ENCODE measurements at regions of chr12 and their contacts with region 1.

Region 1: DNA sequence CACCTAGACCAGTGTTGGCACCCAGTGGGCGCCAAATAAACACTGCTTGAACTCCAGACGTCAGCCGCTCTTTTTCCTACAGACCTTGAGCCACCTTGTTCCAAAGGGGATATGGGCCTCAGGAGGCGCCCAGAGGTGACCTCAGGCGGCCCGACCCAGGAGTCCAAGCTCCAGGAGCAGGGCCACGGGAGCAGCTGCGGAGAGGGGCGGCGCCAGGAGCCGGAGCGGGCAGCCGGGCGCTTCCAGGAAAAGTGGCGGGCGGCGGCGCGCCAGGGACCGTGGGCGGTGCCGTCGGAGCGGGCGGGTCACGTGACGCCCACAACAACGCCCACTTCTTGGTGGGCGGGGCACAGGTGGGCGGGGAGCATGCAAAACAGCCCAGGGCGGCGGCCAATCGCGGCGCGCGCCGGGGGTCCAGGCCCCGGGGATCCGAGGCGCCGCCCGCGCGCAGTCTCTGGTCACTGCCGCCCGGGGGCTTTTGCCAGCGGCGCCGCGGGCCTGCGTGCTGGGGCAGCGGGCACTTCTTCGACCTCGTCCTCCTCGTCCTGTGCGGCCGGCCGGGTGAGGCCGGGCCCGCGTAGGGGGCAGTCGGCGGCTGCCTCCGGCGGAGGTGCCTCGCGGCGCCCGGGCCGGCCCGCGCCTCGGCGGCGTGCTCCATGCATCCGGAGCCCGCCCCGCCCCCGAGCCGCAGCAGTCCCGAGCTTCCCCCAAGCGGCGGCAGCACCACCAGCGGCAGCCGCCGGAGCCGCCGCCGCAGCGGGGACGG is at the start of gene ORAI1:
- DNase-seq: peak; percentile 97
- H3K4me3 Mint-ChIP-seq: peak within 1 kb of the TSS; percentile 90
- H3K27ac Mint-ChIP-seq: peak within 1 kb of the TSS; percentile 87
- H3K4me1 Mint-ChIP-seq: peaks cover 46% of the 10 kb centered on the region
- H3K27me3 Mint-ChIP-seq: no peaks in the 10 kb centered on the region
- total RNA-seq, gene ORAI1: 69.0 to 70.3 TPM

Region 2: DNA sequence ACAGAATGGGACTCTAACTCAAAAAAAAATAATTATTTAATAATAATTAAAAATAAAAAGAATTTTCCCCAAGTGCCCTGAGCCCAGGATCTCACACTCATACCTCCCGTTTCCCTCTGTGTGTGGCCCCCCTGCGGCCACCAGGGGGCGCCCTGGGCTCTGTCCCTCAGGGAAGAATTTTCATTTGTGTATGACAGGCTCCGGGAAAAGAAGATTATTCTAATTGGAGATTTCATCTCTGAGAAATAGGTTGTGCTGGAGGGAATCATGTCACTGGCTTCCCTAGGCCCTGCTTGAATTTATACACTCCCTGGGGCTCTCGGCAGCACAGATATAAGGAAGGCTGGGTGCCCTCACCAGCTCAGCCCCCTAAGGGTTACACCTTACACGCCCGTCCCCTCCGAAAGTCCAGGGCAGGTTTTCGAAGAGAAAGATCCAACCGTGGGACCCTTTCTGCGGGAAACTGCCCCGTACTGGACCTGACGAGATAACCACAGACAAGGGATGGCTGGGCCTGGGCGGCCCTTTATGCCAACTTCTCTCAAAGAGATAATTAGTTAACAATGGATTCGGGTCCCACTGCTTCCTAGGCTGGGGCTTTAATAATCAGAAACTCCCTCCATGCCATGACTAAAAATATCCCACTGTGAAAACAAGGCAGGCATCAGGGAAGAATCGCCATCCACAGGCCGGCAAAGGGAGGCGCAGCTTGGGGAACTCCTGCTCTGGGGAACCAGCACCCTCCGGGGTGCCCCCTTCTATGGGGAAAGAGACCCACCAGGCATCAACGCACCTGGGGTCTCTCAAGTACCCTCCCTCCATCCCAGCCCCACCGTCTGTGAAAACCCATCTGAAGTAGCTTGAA is 126.1 kb before region 1 on chr12:
- CTCF ChIA-PET with region 1: interaction called, 17 read pairs
- POLR2A ChIA-PET with region 1: no interaction called
- DNase-seq: peak; percentile 73
- H3K4me3 Mint-ChIP-seq: no peak overlapping the region
- H3K27ac Mint-ChIP-seq: no peak overlapping the region
- H3K4me1 Mint-ChIP-seq: peaks cover 16% of the 10 kb centered on the region
- H3K27me3 Mint-ChIP-seq: no peaks in the 10 kb centered on the region

Region 3: GRCh38 chr12:121523741-121524140 is 102.5 kb before region 1 on chr12:
- CTCF ChIA-PET with region 1: no interaction called
- POLR2A ChIA-PET with region 1: no interaction called
- DNase-seq: no peak
- H3K4me3 Mint-ChIP-seq: no peak overlapping the region
- H3K27ac Mint-ChIP-seq: no peak overlapping the region
- H3K4me1 Mint-ChIP-seq: peaks cover 6% of the 10 kb centered on the region
- H3K27me3 Mint-ChIP-seq: no peaks in the 10 kb centered on the region

Region 4: DNA sequence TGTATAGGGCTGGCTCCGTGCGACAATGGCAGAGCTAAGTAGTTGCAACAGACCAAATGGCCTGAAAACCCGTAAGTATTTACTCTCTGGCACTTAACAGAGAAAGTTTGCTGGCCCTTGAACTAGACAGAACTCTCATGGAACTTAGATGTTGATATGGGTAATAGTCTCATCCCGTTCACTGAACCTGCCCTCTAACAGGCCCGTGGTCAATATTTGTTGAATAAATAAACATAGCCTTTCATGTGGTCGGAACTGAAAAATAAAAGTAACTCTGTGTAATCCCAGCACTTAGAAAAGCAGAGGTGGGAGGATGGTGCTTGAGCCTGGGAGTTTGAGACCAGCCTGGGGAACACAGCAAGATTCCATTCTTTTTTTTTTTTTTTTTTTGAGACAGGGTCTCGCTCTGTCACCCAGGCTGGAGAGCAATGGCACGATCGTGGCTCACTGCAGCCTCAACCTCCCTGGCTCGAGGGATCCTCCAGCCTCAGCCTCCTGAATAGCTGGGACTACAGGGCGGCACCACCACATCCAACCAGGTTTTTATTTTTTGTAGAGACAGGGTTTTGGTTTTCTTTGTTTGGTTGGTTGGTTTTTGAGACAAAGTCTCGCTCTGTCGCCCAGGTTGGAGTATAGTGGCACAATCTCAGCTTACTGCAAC is 75.2 kb before region 1 on chr12:
- CTCF ChIA-PET with region 1: interaction called, 90 read pairs
- POLR2A ChIA-PET with region 1: interaction called, 31 read pairs
- DNase-seq: no peak
- H3K4me3 Mint-ChIP-seq: no peak overlapping the region
- H3K27ac Mint-ChIP-seq: no peak overlapping the region
- H3K4me1 Mint-ChIP-seq: peaks cover 12% of the 10 kb centered on the region
- H3K27me3 Mint-ChIP-seq: no peaks in the 10 kb centered on the region

Region 5: DNA sequence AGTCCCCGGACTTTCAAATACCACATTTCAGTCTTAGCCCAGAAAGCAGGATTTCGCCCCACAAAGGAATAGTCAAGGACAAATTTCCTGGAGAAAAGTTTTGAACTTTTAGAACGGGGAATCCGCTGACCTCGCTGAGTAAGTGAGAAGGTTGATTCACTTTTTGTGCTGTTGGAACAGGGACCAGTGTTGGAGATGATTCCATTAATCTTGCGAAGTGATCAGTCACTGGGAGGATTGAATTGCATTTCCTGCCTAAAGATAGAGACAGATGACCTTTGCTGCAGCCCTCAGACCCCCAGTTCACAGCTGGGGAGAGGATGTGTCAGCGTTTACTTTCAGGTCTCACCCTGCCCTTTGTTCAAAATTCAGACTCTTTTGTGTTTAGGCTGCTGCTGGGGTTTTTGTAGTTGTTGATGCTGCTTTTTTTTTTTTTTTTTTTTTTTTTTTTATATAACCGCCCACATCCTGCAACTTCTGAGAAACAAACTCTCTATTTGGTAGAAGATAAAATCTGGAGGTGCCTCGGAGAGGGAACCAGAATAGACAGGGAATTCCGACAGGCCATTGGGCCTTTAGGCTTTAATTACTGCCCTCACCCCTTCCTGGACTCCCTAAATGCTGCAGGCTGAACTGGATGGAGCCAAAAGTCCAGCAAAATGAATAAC is 35.7 kb before region 1 on chr12:
- CTCF ChIA-PET with region 1: interaction called, 11 read pairs
- POLR2A ChIA-PET with region 1: interaction called, 42 read pairs
- DNase-seq: peak; percentile 66
- H3K4me3 Mint-ChIP-seq: peak overlapping the region; percentile 72
- H3K27ac Mint-ChIP-seq: peak overlapping the region; percentile 100
- H3K4me1 Mint-ChIP-seq: peaks cover 33% of the 10 kb centered on the region
- H3K27me3 Mint-ChIP-seq: no peaks in the 10 kb centered on the region

Region 6: DNA sequence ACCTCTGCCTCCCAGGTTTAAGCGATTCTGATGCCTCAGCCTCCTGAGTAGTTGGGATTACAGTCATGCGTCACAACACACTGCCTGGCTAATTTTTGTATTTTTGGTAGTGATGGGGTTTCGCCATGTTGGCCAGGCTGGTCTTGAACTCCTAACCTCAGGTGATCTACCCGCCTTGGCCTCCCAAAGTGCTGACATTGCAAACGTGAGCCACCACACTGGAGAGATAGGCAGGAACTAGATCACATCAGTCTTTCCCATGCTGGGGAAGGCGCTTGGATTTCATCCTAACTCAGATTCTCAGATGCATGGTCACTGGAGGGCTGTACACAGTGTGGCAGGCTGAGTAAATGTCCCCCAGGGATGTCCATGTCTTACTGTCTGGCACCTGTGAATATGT is 18.0 kb before region 1 on chr12:
- CTCF ChIA-PET with region 1: no interaction called
- POLR2A ChIA-PET with region 1: no interaction called
- DNase-seq: no peak
- H3K4me3 Mint-ChIP-seq: no peak overlapping the region
- H3K27ac Mint-ChIP-seq: no peak overlapping the region
- H3K4me1 Mint-ChIP-seq: peaks cover 2% of the 10 kb centered on the region
- H3K27me3 Mint-ChIP-seq: peaks cover 1% of the 10 kb centered on the region

Region 7: DNA sequence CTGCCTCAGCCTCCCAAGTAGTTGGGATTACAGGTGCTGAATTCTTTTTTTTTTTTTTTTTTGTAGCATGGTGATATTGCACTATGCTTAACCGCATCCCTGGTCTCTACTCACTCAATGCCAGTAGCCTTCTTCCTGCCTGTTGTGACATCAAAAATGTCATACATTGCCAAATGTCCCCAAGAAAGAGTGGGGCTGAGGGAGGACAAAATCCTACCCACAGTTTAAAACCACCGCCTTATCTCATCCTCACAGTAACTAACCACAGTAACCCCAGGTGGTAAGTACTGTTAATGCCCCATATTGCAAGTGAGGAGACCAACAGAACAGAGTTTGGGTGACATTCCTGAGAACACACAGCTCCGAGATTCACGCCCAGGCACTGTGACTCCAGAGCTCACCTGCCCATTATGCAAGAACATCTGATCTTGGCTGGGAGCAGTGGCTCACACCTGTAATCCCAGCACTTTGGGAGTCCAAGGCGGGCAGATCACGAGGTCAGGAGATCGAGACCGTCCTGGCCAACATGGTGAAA is 23.6 kb after region 1 on chr12:
- CTCF ChIA-PET with region 1: interaction called, 18 read pairs
- POLR2A ChIA-PET with region 1: interaction called, 39 read pairs
- DNase-seq: peak; percentile 58
- H3K4me3 Mint-ChIP-seq: no peak overlapping the region
- H3K27ac Mint-ChIP-seq: peak overlapping the region; percentile 80
- H3K4me1 Mint-ChIP-seq: peaks cover 43% of the 10 kb centered on the region
- H3K27me3 Mint-ChIP-seq: no peaks in the 10 kb centered on the region

Region 8: DNA sequence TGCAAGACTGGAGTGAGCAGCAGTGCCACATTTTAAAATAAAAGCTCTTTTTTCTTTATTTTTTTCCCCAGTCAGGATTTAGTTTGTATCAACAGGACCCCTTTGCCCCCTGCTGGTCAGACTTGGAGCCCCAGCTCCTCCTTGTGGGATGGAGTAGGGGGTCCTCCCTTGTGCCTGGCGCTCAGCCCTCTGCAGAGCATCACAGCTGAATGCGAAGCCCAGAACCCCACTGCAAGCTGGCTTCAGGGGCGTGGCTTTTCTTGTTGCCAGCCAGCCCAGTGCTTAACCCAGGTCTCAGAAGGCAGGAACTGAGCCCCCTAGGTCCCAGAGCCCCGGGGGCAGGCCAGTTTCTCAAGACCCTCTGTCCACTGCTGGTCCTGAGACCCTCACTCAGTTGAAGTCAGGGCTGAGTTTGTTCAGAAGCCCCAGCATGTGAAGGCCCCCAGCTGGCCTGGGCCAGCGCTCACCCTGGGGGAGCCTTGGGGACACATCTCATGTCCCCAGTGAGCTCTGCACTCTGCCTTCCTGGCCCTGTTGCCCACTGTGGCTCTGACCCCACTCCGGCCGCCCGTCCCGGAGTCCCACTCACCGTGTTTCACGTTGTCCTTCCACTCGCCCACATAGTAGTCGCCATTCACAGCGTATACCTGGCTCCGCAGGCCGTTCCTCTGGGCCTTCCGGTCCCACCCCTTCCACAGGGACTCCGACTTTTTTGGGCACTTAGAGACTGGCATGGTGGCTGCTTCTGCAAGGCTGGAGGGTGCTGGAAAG is 42.7 kb after region 1 on chr12:
- CTCF ChIA-PET with region 1: interaction called, 80 read pairs
- POLR2A ChIA-PET with region 1: interaction called, 57 read pairs
- DNase-seq: peak; percentile 57
- H3K4me3 Mint-ChIP-seq: no peak overlapping the region
- H3K27ac Mint-ChIP-seq: no peak overlapping the region
- H3K4me1 Mint-ChIP-seq: peaks cover 65% of the 10 kb centered on the region
- H3K27me3 Mint-ChIP-seq: no peaks in the 10 kb centered on the region

Region 9: GRCh38 chr12:121688966-121689365 is 62.7 kb after region 1 on chr12:
- CTCF ChIA-PET with region 1: interaction called, 25 read pairs
- POLR2A ChIA-PET with region 1: interaction called, 12 read pairs
- DNase-seq: no peak
- H3K4me3 Mint-ChIP-seq: no peak overlapping the region
- H3K27ac Mint-ChIP-seq: no peak overlapping the region
- H3K4me1 Mint-ChIP-seq: peaks cover 15% of the 10 kb centered on the region
- H3K27me3 Mint-ChIP-seq: peaks cover 2% of the 10 kb centered on the region

Measured in activated CD4-positive, alpha-beta memory T cell treated with anti-CD3 and anti-CD28 coated beads, Interleukin-2, amount 10 ng/mL, durations not matched to agents 7 days and 5 days (primary cell).